B cell (primary cell): ENCODE measurements at regions of chr11 and their contacts with region 1.

Region 1: GRCh38 chr11:126268708-126269579 is at the starts of genes FOXRED1 and SRPRA:
- DNase-seq: peak; percentile 99
- ATAC-seq: peak; percentile 99
- H3K4me3 ChIP-seq: peak within 1 kb of the TSS; percentile 83 to 98 (median 89)
- H3K4me3 Mint-ChIP-seq: peak within 1 kb of the TSS; percentile 96
- H3K27ac ChIP-seq: peak within 1 kb of the TSS; percentile 94 to 95
- H3K27ac Mint-ChIP-seq: peak within 1 kb of the TSS; percentile 93
- H3K4me1 ChIP-seq: peaks cover 14 to 20% of the 10 kb centered on the region in 2 donors
- H3K4me1 Mint-ChIP-seq: peaks cover 36% of the 10 kb centered on the region
- H3K27me3 ChIP-seq: no peaks in the 10 kb centered on the region
- H3K27me3 Mint-ChIP-seq: no peaks in the 10 kb centered on the region
- CTCF ChIP-seq: no peak
- total RNA-seq, gene FOXRED1: 44.4 and 46.0 TPM in 2 replicates
- total RNA-seq, gene SRPRA: 129 and 136 TPM in 2 replicates

Region 2: DNA sequence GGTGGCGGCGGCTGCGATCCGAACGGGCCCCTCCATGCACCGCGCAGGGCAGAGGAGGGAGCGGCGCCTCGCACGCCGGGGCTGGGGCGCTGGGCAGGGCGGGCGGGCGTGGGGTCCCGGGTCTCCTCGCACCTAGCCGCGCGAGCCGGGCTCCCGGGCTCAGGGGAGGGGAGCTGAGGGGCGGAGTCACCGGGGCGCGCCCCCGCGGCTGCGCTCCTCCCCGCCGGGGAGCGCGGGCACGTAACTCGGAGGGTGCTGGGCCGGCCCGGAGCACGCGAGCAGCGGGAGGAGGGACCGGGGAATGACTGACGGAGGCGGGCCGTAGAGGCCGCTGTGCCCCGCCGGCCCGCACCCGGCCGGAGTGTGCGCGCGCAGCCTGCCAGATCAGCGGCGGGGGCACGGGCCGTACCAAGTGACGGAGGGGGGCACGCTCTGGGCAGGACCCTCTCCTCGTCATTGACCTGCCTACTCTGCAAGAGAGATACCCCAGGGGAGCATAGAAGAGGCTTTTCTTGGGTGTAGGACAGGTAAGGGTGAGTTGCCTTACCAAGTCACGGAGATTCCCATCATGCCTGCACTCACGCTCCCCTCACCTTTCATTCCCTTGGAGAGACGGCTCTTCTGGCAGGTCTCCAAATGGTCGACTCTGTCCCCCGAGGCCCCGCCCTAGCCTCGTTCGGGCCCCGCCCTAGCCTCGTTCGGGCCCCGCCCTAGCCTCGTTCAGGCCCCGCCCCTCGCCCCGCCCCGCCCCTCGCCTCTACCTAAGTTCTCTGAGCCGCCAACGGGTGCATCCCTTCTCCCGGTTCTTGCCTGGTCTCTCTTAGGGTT is 206.1 kb before region 1 on chr11 and contains the start of gene CDON:
- CTCF ChIA-PET with region 1: no interaction called
- POLR2A ChIA-PET with region 1: no interaction called
- intact Hi-C with region 1: loop called (anchors 2 kb)
- DNase-seq: peak; percentile 91
- ATAC-seq: peak; percentile 85
- H3K4me3 ChIP-seq: peak within 1 kb of the TSS; percentile 47 to 69 (median 62)
- H3K4me3 Mint-ChIP-seq: peak within 1 kb of the TSS; percentile 84
- H3K27ac ChIP-seq: no peak within 1 kb of the TSS
- H3K27ac Mint-ChIP-seq: peak within 1 kb of the TSS; percentile 62
- H3K4me1 ChIP-seq: peaks cover 8 to 10% of the 10 kb centered on the region in 2 donors
- H3K4me1 Mint-ChIP-seq: peaks cover 10% of the 10 kb centered on the region
- H3K27me3 ChIP-seq: peaks cover 0 to 29% (median 18%) of the 10 kb centered on the region in 4 experiments
- H3K27me3 Mint-ChIP-seq: peaks cover 52% of the 10 kb centered on the region
- CTCF ChIP-seq: no peak
- total RNA-seq, gene CDON: not detected in 2 replicates

Region 3: DNA sequence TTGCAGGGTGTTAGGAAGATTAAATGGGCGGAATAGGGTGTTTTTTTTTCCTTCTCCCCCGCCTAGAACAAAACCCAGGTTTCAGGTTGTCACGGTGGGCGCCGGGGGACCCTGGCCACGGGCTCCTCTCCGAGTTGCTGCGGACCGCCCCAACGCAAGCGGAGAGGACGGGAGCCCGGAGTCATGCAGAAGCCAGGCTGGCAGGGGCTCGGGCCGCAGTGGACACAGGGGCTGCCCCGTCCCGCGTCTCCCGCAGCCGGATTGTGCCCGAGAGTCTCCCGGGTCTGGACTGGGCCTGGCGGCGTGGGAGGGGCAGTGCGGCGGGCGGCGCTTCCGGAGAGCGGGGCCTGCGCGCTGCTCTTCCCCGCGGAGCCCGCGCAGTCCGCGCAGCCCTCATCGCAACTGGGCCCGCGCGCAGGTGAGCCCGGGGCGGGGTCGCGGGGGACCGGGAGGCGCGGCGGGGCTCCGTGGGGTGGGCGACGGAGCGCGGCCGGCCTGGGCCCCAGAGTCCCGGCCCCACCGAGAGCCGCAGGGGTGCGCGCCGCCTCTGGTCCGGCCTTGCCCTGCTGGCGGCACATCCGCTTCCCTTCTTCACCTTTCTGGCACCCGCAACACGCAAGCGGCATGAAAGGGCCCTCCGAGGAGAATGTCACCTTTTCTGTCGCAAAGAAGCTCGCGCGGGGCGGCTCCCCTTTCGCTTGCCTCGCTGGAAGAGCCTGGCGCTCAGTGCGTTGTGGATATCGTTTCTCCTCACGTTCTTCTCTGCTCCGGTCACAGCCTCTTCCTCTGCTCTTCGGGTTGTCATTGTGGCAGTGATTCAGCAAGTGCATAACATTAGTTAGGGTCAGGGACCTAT is 14.0 kb after region 1 on chr11 and contains the start of gene TIRAP:
- CTCF ChIA-PET with region 1: no interaction called
- POLR2A ChIA-PET with region 1: interaction called, 9 read pairs
- intact Hi-C with region 1: loop called (anchors 1 kb)
- DNase-seq: peak; percentile 77
- ATAC-seq: peak; percentile 77
- H3K4me3 ChIP-seq: peak within 1 kb of the TSS; percentile 56 to 87 (median 73)
- H3K4me3 Mint-ChIP-seq: peak within 1 kb of the TSS; percentile 100
- H3K27ac ChIP-seq: peak within 1 kb of the TSS; percentile 69 to 86
- H3K27ac Mint-ChIP-seq: peak within 1 kb of the TSS; percentile 95
- H3K4me1 ChIP-seq: peaks cover 17 to 31% of the 10 kb centered on the region in 2 donors
- H3K4me1 Mint-ChIP-seq: peaks cover 44% of the 10 kb centered on the region
- H3K27me3 ChIP-seq: no peaks in the 10 kb centered on the region
- H3K27me3 Mint-ChIP-seq: no peaks in the 10 kb centered on the region
- CTCF ChIP-seq: no peak
- total RNA-seq, gene TIRAP: 25.1 and 27.1 TPM in 2 replicates

Region 4: GRCh38 chr11:126303623-126304456 is 34.9 kb after region 1 on chr11 and contains the start of gene DCPS:
- CTCF ChIA-PET with region 1: interaction called, 4 read pairs
- POLR2A ChIA-PET with region 1: interaction called, 5 read pairs
- intact Hi-C with region 1: loop called (anchors 1 kb)
- DNase-seq: peak; percentile 89
- ATAC-seq: peak; percentile 98
- H3K4me3 ChIP-seq: peak within 1 kb of the TSS; percentile 60 to 99 (median 97)
- H3K4me3 Mint-ChIP-seq: peak within 1 kb of the TSS; percentile 88
- H3K27ac ChIP-seq: peak within 1 kb of the TSS; percentile 82 to 90
- H3K27ac Mint-ChIP-seq: peak within 1 kb of the TSS; percentile 94
- H3K4me1 ChIP-seq: peaks cover 11 to 33% of the 10 kb centered on the region in 2 donors
- H3K4me1 Mint-ChIP-seq: peaks cover 35% of the 10 kb centered on the region
- H3K27me3 ChIP-seq: no peaks in the 10 kb centered on the region
- H3K27me3 Mint-ChIP-seq: no peaks in the 10 kb centered on the region
- CTCF ChIP-seq: no peak
- total RNA-seq, gene DCPS: 21.7 and 24.5 TPM in 2 replicates

Region 5: DNA sequence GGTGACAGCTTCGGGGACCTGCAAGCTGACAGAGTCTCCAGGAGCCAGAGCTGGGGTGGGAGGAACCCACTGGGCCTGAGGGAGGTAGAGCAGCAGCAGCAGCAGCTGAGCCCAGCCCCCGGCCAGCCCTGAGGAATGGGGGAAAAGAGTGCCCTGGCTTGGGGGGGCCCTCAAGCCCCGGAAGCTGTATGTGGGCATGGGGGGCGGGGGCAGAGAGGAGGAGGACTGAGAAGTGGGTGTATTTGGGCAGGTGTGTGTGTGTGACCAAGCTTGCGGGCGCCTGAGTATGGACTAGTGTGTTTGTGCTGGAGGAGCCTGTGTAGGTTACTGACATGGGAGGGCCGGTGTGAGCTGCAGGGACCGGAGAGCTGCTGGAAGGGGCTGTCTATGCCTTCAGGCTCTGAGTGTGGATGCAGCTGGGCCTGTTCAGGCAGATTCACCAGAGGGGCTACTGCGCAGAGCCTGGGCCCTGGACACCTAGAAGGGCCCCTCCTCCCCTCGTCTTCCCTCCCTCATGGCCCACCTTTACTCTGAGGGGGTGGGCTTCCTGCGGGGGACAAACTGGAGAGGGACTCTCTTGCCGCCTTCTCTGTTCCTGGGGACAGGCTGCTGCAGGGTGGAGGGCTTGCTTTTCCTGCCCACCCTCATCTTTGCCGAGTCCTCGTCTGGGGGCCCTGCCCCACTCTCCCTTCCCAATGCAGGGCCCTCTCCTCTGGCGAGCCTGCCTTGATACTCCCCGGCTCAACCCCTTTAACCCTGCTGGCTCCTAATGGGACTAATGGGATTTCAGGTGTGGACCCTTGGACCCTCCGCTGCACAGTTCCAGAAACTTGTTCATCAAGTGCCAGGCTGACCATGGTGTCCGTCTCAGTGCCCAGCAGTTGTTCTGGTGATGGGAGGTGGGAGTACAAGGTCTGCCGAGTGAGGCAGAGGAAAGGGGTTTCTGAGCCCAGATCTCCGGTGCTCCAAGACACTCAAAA is 114.7 kb after region 1 on chr11:
- CTCF ChIA-PET with region 1: no interaction called
- POLR2A ChIA-PET with region 1: no interaction called
- intact Hi-C with region 1: no loop called
- DNase-seq: no peak
- ATAC-seq: no peak
- H3K4me3 ChIP-seq: no peak overlapping the region
- H3K4me3 Mint-ChIP-seq: no peak overlapping the region
- H3K27ac ChIP-seq: no peak overlapping the region
- H3K27ac Mint-ChIP-seq: no peak overlapping the region
- H3K4me1 ChIP-seq: no peaks in the 10 kb centered on the region
- H3K4me1 Mint-ChIP-seq: no peaks in the 10 kb centered on the region
- H3K27me3 ChIP-seq: no peaks in the 10 kb centered on the region
- H3K27me3 Mint-ChIP-seq: no peaks in the 10 kb centered on the region
- CTCF ChIP-seq: no peak